Heart right ventricle (tissue), 16 donors: ENCODE measurements at regions of chr9 and their contacts with region 1.

Region 1: DNA sequence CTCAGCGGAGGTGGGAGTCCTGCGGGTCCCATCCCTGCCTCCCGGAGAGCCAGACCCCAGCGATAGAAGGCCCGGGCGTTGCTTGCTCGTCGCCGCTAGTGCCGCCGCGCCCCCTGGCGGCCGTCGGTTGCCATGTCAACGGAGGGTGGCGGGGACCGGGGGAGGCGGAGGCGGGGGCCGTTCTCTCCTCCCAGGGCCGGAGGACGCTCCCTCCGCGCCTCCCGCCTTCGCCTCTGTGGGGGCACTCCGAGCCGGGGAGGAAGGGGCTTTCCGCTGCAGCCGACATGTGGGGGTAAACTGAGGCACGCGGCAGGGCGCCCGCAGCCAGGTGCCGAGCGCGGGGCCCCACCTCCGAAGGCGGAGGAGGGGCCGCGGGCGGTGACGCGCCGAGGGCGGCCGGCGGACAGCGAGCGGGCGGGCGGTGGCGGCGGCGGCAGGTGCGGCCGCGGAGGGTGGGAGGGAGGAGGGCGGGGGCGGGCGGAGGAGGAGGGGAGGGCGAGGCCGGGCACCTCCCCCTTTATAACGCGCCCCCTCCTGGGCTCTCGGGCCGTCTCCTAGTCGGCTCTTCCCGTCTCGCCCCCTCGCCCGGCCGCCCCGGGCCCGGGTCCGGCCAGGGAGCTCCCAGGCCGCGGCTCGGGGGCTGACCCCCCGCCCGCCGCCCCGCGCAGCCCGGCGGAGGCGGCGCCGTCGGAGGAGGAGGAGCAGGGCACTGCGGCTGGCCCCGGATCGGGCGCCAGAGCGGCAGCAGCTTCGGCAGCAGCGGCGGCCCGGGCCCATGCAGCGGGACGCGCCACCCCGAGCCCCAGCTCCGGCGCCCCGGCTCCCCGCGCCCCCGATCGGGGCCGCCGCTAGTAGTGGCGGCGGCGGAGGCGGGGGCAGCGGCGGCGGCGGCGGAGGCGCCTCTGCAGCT is 556 bp upstream of the CDK9 start:
- DNase-seq: peak; percentile 89 to 92
- ATAC-seq: peak; percentile 62 to 78 (median 70)
- H3K4me3 ChIP-seq: peak overlapping the region; percentile 19 to 100 (median 97)
- H3K27ac ChIP-seq: peak overlapping the region; percentile 88 to 99 (median 98)
- H3K4me1 ChIP-seq: peaks cover 9 to 82% (median 52%) of the 10 kb centered on the region in 9 donors
- H3K27me3 ChIP-seq: no peaks in the 10 kb centered on the region
- CTCF ChIP-seq: peak; percentile 90 to 96 (median 92)

Region 2: GRCh38 chr9:127734747-127735529 is 50.3 kb before region 1 on chr9 and contains the start of gene TOR2A:
- intact Hi-C with region 1: loop called in 8 of 10 experiments (anchors 1 to 5 kb)
- DNase-seq: peak; percentile 98 to 99
- ATAC-seq: peak; percentile 94 to 97 (median 95)
- H3K4me3 ChIP-seq: peak within 1 kb of the TSS; percentile 46 to 95 (median 78)
- H3K27ac ChIP-seq: peak within 1 kb of the TSS; percentile 90 to 99 (median 97)
- H3K4me1 ChIP-seq: peaks cover 10 to 35% (median 19%) of the 10 kb centered on the region in 9 donors
- H3K27me3 ChIP-seq: no peaks in the 10 kb centered on the region
- CTCF ChIP-seq: peak; percentile 90 to 99 (median 95)
- total RNA-seq, gene TOR2A: 1.5 to 6.3 (median 2.2) TPM

Region 3: GRCh38 chr9:127742435-127743088 is 42.7 kb before region 1 on chr9:
- intact Hi-C with region 1: loop called in 5 of 10 experiments (anchors 2 to 5 kb)
- DNase-seq: no peak
- ATAC-seq: peak in 4 of 8 donors; percentile 11 to 54 (median 30)
- H3K4me3 ChIP-seq: peak overlapping the region in 9 of 10 donors; percentile 18 to 51 (median 41)
- H3K27ac ChIP-seq: peak overlapping the region in 4 of 10 donors; percentile 4 to 65 (median 28)
- H3K4me1 ChIP-seq: peaks cover 2 to 40% (median 21%) of the 10 kb centered on the region in 9 donors
- H3K27me3 ChIP-seq: no peaks in the 10 kb centered on the region
- CTCF ChIP-seq: no peak

Region 4: GRCh38 chr9:127802576-127803443 is 17.5 kb after region 1 on chr9 and contains the start of gene FPGS:
- intact Hi-C with region 1: loop called in 2 of 10 experiments (anchors 1 to 2 kb)
- DNase-seq: peak; percentile 88 to 91
- ATAC-seq: peak; percentile 91 to 96 (median 94)
- H3K4me3 ChIP-seq: peak within 1 kb of the TSS; percentile 53 to 79 (median 70)
- H3K27ac ChIP-seq: peak within 1 kb of the TSS; percentile 81 to 98 (median 93)
- H3K4me1 ChIP-seq: peaks cover 8 to 38% (median 22%) of the 10 kb centered on the region in 9 donors
- H3K27me3 ChIP-seq: no peaks in the 10 kb centered on the region
- CTCF ChIP-seq: no peak
- total RNA-seq, gene FPGS: 40.2 to 58.5 (median 46.5) TPM

Region 5: DNA sequence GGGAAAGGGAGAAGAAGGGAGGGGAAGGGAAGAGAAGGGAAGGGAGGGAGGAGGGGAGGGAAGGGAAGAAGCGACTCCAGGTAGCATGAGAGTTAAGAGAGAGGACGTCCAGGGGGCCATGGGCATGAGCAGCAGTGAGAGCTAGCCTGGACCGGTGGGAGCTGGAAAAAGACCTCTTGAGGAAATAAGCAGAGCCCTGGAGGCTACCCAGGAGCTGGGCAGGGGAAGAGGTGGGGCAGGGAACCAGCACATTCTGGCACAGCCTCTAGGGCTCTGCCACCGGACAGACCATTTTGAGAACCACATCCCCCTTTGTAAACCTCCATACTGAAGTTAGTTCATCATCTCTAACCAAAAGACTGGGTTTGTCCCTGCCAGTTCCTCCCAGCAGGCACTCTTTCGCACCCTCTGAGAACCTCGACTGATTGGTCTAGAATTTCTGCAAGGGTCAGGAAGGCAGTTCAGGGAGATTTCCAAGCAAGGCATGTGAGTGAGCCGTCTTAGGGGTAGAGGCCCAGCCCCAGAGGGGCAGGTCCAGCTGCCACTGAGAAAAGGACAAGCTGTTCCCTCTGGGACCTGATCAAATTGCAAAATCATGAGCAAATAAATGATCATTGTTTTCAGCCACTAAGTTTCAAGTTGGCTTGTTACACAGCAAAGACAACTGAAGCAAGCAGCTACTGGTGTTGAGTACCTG is 270.2 kb after region 1 on chr9:
- intact Hi-C with region 1: no loop called
- DNase-seq: no peak
- ATAC-seq: peak in 7 of 8 donors; percentile 32 to 79 (median 54)
- H3K4me3 ChIP-seq: no peak overlapping the region
- H3K27ac ChIP-seq: peak overlapping the region in 6 of 10 donors; percentile 30 to 78 (median 44)
- H3K4me1 ChIP-seq: peaks cover 2 to 40% (median 14%) of the 10 kb centered on the region in 9 donors
- H3K27me3 ChIP-seq: no peaks in the 10 kb centered on the region
- CTCF ChIP-seq: no peak